ENCODE measurements at regions of chr3 and their contacts with region 1.

Region 1: DNA sequence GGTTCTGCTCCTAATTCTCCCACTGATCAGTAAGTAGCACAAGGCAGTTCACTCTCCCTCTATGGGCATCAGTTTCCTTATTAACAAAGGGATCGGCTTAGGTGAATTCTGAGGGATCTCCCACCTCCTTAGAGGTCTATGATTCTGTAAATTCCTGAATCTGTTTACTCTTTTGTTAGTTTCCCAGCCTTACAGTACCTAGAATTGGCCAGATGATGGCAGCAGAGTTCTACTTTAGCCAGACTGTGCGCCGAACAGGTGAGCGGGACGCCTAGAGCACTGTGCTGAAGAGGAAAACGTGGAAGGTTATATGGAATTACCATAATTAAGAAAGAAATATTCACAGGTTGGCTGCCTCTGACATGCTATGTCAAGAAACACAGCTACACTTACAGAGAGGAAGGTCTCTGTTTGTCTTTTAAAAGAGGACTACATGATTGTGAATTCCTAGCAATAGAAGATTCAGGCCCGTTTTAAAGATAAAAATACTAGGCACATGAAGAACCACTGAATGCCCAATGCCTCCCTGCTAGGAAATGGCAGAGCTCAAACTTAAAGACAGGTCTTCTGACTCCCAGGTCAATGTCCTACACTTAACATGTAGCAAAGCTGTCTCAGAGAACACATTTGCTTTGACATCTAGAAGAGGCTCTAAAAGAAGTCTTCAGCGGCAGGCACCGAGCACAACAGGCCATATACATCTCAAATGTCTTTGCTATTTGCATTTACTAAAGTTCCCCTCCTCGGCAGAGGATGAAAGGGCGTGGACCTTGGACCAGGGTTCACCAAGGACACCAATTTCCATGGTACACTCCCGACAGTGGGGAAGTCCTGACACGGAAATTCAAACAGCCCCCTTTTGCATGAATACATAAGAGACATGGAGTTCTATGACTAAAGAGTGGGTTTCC is 259.9 kb downstream of the FGF12 start:
- DNase-seq: peak; percentile 51 to 68
- H3K4me3 ChIP-seq: no peak overlapping the region
- H3K4me3 Mint-ChIP-seq: no peak overlapping the region
- H3K27ac Mint-ChIP-seq: no peak overlapping the region
- H3K4me1 ChIP-seq: peaks cover 4% of the 10 kb centered on the region; the same call in 1 of the 2 replicates
- H3K4me1 Mint-ChIP-seq: peaks cover 5% of the 10 kb centered on the region
- H3K27me3 ChIP-seq: no peaks in the 10 kb centered on the region
- H3K27me3 Mint-ChIP-seq: peaks cover 18% of the 10 kb centered on the region
- CTCF ChIP-seq: peak; percentile 86 to 90

Region 2: GRCh38 chr3:192772240-192772894 is 304.9 kb after region 1 on chr3:
- CTCF ChIA-PET with region 1: no interaction called
- POLR2A ChIA-PET with region 1: no interaction called
- intact Hi-C with region 1: loop called (anchors 1 kb)
- DNase-seq: peak in 1 of 2 experiments; percentile 56
- H3K4me3 ChIP-seq: no peak overlapping the region
- H3K4me3 Mint-ChIP-seq: no peak overlapping the region
- H3K27ac Mint-ChIP-seq: no peak overlapping the region
- H3K4me1 ChIP-seq: no peaks in the 10 kb centered on the region
- H3K4me1 Mint-ChIP-seq: no peaks in the 10 kb centered on the region
- H3K27me3 ChIP-seq: no peaks in the 10 kb centered on the region
- H3K27me3 Mint-ChIP-seq: peaks cover 8% of the 10 kb centered on the region
- CTCF ChIP-seq: peak; percentile 36 to 76

Region 3: DNA sequence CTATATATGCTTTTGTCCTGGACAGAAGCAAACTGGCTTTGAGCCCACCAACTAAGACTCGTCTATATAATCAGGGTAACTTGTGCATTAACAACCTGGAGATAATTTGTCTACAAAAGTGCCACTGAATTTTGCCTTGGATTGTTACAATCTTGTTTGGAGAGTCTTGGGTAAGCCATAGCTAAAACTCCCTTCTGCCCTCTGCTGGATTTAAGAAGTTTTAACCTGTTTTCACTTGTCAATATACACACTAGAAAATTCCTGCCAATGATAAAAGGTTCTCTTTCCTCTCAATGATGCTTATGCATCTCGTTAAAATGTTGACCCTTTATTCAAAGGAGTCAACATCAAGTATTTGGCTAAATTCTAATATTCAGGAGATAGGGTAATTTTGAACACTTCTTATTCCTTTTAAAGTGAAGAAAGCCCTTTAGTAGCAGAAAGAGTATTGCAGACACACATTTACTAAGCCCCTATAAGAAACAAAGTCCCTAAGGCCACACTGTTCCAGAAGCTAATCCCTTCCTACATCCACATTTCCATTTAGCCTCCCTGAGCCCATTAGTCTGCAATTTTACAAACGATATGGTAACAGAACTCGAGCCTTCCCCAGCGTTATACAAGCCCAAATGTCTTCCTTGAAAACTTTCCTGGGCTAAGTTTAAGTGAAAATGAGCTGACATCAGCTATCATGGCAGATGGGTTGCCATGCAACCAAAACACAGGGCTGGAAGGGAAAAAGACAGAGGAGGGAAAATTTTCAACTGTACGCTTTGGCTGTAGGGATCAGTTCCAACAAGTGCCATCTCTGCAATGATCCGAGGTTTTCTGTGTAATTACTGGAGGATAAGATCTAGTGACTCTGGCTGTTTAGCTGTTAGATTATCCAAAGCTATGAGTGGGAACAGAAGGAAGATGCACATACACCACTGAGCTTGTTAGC is 335.7 kb after region 1 on chr3:
- CTCF ChIA-PET with region 1: interaction called, 3 read pairs
- POLR2A ChIA-PET with region 1: no interaction called
- intact Hi-C with region 1: loop called (anchors 1 kb)
- DNase-seq: peak in 1 of 2 experiments; percentile 25
- H3K4me3 ChIP-seq: no peak overlapping the region
- H3K4me3 Mint-ChIP-seq: no peak overlapping the region
- H3K27ac Mint-ChIP-seq: no peak overlapping the region
- H3K4me1 ChIP-seq: no peaks in the 10 kb centered on the region
- H3K4me1 Mint-ChIP-seq: no peaks in the 10 kb centered on the region
- H3K27me3 ChIP-seq: no peaks in the 10 kb centered on the region
- H3K27me3 Mint-ChIP-seq: no peaks in the 10 kb centered on the region
- CTCF ChIP-seq: peak; percentile 45 to 61

Region 4: GRCh38 chr3:192851821-192852424 is 384.4 kb after region 1 on chr3:
- CTCF ChIA-PET with region 1: no interaction called
- POLR2A ChIA-PET with region 1: no interaction called
- intact Hi-C with region 1: no loop called
- DNase-seq: peak in 1 of 2 experiments; percentile 12
- H3K4me3 ChIP-seq: no peak overlapping the region
- H3K4me3 Mint-ChIP-seq: no peak overlapping the region
- H3K27ac Mint-ChIP-seq: peak overlapping the region; percentile 94
- H3K4me1 ChIP-seq: peaks cover 51% of the 10 kb centered on the region
- H3K4me1 Mint-ChIP-seq: peaks cover 40% of the 10 kb centered on the region
- H3K27me3 ChIP-seq: no peaks in the 10 kb centered on the region
- H3K27me3 Mint-ChIP-seq: no peaks in the 10 kb centered on the region
- CTCF ChIP-seq: no peak

Measured in Caco-2 (cell line).